Heart left ventricle (tissue), 16 donors: ENCODE measurements at regions of chr1 and their contacts with region 1.

Region 1: DNA sequence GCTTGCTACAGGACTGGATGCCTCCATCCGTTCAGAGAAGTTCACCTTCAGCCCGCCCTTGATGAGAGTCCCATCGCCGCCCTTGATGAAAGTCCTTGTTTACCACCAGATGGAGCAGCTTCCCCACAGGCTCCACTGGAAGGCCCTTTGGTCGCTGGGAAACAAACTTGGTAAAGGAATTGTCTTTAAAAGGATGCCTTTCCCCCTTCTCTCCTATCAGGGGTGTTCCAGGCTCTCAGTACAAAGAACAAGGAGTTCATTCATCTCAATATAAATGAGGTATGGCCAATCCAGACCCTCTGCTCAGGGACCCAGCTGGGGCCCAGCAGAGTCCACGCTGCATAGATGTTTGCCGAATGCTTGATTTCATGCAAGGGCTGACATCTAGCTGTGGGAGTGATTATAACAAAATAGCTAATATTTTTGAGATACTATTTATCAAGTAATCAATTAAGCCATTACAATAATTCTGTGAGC is 50.8 kb downstream of the CAPN9 start:
- DNase-seq: peak in 4 of 5 donors; percentile 64 to 78 (median 67)
- ATAC-seq: peak; percentile 83 to 95 (median 90)
- H3K4me3 ChIP-seq: peak overlapping the region in 1 of 12 donors; percentile 12
- H3K27ac ChIP-seq: no peak overlapping the region
- H3K4me1 ChIP-seq: no peaks in the 10 kb centered on the region
- H3K27me3 ChIP-seq: no peaks in the 10 kb centered on the region
- CTCF ChIP-seq: peak; percentile 39 to 87 (median 79)
- POLR2A ChIP-seq: no peak

Region 2: DNA sequence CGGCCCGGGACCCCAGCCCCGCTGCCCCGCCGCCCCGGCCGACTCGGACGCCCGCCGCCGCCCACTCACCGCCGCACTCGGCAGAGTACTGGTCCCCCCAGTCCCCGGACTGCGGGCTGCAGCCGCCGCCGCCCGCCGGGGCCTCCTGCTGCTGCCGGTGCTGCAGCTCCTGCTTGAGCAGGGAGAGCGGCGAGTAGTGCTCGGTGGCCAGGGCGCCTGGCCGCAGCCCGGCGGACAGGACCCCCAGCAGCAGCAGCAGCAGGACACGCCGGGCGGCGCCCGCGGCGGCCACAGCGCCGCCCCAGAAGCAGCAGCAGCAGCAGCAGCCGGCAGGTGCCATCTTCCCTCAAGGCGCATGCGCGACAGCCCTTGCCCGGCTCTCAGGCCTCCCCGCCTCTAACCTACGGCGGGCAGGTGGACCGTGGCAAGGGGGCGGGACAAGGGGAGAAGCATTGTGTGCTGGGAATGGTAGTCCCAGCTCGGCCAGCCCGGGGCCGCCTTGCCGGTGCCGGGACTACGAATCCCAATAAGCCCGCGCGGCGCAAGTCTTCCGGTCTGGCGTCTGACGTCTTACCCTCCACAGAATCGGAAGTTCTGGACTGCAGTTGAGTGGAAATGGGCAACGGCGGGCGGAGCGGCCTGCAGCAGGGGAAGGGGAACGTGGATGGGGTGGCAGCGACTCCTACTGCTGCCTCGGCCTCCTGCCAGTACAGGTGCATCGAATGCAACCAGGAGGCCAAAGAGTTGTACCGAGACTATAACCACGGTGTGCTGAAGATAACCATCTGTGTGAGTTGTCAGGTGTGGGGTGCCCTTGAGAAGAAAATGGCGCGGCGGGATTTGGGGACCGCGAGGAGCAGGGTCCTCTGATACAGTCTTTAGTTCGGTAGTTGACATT is 180.8 kb after region 1 on chr1 and contains the starts of genes ARV1 and TTC13:
- intact Hi-C with region 1: loop called in 1 of 10 experiments (anchors 5 kb)
- DNase-seq: peak; percentile 98 to 100 (median 99)
- ATAC-seq: peak; percentile 100
- H3K4me3 ChIP-seq: peak within 1 kb of the TSS; percentile 40 to 92 (median 80)
- H3K27ac ChIP-seq: peak within 1 kb of the TSS; percentile 75 to 88 (median 80)
- H3K4me1 ChIP-seq: peaks cover 0 to 41% (median 20%) of the 10 kb centered on the region in 12 donors
- H3K27me3 ChIP-seq: no peaks in the 10 kb centered on the region
- CTCF ChIP-seq: peak in 7 of 12 donors; percentile 19 to 48 (median 28)
- POLR2A ChIP-seq: peak in 1 of 2 donors; percentile 79
- total RNA-seq, gene ARV1: 16.3 to 24.8 (median 22.0) TPM
- total RNA-seq, gene TTC13: 5.8 to 9.6 (median 6.9) TPM